B cell (primary cell): ENCODE measurements at regions of chr16 and their contacts with region 1.

Region 1: DNA sequence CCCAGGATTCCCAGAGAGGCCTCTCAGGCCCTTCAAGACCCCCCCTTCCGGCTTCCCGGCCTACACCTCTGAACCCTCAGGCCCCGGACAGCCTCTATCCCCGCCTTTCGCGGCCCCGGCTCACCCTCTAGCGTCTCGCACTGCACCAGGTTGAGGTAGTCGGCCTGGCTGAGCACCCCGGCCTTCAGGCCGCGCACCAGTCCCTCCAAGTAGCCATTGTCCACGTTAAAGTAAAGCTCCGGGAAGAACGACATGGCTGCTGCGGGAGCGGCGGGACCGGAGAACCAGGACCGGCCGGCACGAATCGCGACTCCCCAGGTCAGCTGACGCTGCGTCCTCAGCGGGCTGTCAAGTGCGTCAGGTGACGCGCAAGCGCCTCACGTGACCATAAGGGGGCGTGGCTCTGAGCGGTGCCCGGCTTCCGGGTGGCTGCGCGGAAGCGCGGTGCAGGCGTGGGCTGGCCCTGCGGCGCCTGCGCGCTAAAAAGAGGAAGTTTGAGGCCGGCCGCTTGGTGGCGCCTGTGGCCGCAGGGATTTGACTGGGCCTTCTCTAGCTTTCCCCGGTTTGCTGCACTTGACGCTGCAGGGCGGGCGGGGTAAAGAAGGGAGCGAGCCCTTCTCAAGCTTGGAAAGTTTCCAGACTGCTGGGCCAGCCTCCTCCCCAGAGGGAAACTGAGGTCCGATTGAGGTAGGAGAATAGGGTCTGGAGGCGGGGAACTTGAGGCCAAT is at the start of gene ATP6V0D1:
- DNase-seq: peak; percentile 100
- ATAC-seq: peak; percentile 85
- H3K4me3 ChIP-seq: peak within 1 kb of the TSS; percentile 67 to 100 (median 99)
- H3K4me3 Mint-ChIP-seq: peak within 1 kb of the TSS; percentile 99
- H3K27ac ChIP-seq: peak within 1 kb of the TSS; percentile 99 to 100
- H3K27ac Mint-ChIP-seq: peak within 1 kb of the TSS; percentile 98
- H3K4me1 ChIP-seq: peaks cover 38 to 52% of the 10 kb centered on the region in 2 donors
- H3K4me1 Mint-ChIP-seq: peaks cover 63% of the 10 kb centered on the region
- H3K27me3 ChIP-seq: no peaks in the 10 kb centered on the region
- H3K27me3 Mint-ChIP-seq: no peaks in the 10 kb centered on the region
- CTCF ChIP-seq: peak; percentile 79
- total RNA-seq, gene ATP6V0D1: 59.7 and 62.1 TPM in 2 replicates

Region 2: GRCh38 chr16:67399181-67399733 is 81.7 kb before region 1 on chr16:
- CTCF ChIA-PET with region 1: no interaction called
- POLR2A ChIA-PET with region 1: no interaction called
- intact Hi-C with region 1: no loop called
- DNase-seq: peak; percentile 72
- ATAC-seq: peak; percentile 78
- H3K4me3 ChIP-seq: no peak overlapping the region
- H3K4me3 Mint-ChIP-seq: no peak overlapping the region
- H3K27ac ChIP-seq: no peak overlapping the region
- H3K27ac Mint-ChIP-seq: no peak overlapping the region
- H3K4me1 ChIP-seq: peaks cover 11 to 16% of the 10 kb centered on the region in 2 donors
- H3K4me1 Mint-ChIP-seq: peaks cover 4% of the 10 kb centered on the region
- H3K27me3 ChIP-seq: peaks cover 0 to 33% (median 11%) of the 10 kb centered on the region in 4 experiments
- H3K27me3 Mint-ChIP-seq: peaks cover 17% of the 10 kb centered on the region
- CTCF ChIP-seq: peak; percentile 84

Region 3: GRCh38 chr16:67499106-67499505 is 18.1 kb after region 1 on chr16:
- CTCF ChIA-PET with region 1: interaction called, 127 read pairs
- POLR2A ChIA-PET with region 1: interaction called, 5 read pairs
- intact Hi-C with region 1: loop called (anchors 2 kb)
- DNase-seq: no peak
- ATAC-seq: no peak
- H3K4me3 ChIP-seq: no peak overlapping the region
- H3K4me3 Mint-ChIP-seq: no peak overlapping the region
- H3K27ac ChIP-seq: no peak overlapping the region
- H3K27ac Mint-ChIP-seq: peak overlapping the region; percentile 70
- H3K4me1 ChIP-seq: peaks cover 13 to 17% of the 10 kb centered on the region in 2 donors
- H3K4me1 Mint-ChIP-seq: peaks cover 29% of the 10 kb centered on the region
- H3K27me3 ChIP-seq: no peaks in the 10 kb centered on the region
- H3K27me3 Mint-ChIP-seq: no peaks in the 10 kb centered on the region
- CTCF ChIP-seq: no peak

Region 4: GRCh38 chr16:67530013-67530939 is 49.3 kb after region 1 on chr16:
- CTCF ChIA-PET with region 1: interaction called, 817 read pairs
- POLR2A ChIA-PET with region 1: interaction called, 13 read pairs
- intact Hi-C with region 1: loop called (anchors 2 kb)
- DNase-seq: peak; percentile 94
- ATAC-seq: peak; percentile 59
- H3K4me3 ChIP-seq: peak overlapping the region; percentile 65 to 92 (median 85)
- H3K4me3 Mint-ChIP-seq: peak overlapping the region; percentile 95
- H3K27ac ChIP-seq: peak overlapping the region; percentile 96 to 100
- H3K27ac Mint-ChIP-seq: peak overlapping the region; percentile 98
- H3K4me1 ChIP-seq: peaks cover 38 to 70% of the 10 kb centered on the region in 2 donors
- H3K4me1 Mint-ChIP-seq: peaks cover 63% of the 10 kb centered on the region
- H3K27me3 ChIP-seq: no peaks in the 10 kb centered on the region
- H3K27me3 Mint-ChIP-seq: no peaks in the 10 kb centered on the region
- CTCF ChIP-seq: no peak

Region 5: DNA sequence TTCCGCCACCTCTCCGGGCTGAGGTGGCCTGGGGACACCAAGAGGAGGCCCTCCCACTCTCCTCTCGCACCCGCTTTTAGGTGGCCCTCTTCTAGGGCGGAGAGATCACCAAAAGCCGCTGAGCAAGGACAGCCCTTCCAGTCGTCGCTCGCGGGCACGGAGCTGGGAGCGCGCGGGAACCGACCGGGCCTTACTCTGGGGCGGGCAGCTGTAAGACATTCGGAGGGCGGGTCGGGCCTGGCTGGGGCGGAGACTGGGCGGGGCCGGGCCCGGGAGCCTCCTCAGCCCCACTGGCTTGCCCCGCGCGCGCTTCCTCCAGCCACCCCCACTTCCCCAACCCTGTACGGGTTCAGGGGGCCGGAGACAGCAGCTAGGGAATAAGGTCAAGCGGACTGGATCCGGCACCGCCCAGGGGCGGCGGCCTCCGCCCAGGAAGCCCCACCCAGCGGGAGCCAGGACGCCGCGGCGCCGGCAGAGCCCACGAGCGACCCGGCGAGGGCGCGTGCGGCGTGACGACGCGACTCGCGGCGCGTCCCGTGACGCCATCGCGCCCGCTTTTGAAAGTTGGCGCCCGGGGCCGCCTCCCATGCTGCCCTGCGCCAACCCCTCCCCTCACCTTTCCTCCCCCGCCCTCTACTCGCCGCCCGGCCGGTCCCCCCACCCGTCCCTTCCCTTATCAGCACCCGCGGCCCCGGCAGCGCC is 81.0 kb after region 1 on chr16:
- CTCF ChIA-PET with region 1: interaction called, 13 read pairs
- POLR2A ChIA-PET with region 1: interaction called, 4 read pairs
- intact Hi-C with region 1: loop called (anchors 1 kb)
- DNase-seq: peak; percentile 99
- ATAC-seq: peak; percentile 74
- H3K4me3 ChIP-seq: peak overlapping the region; percentile 50 to 76 (median 60)
- H3K4me3 Mint-ChIP-seq: peak overlapping the region; percentile 89
- H3K27ac ChIP-seq: peak overlapping the region; percentile 71 to 80
- H3K27ac Mint-ChIP-seq: peak overlapping the region; percentile 95
- H3K4me1 ChIP-seq: peaks cover 42 to 55% of the 10 kb centered on the region in 2 donors
- H3K4me1 Mint-ChIP-seq: peaks cover 50% of the 10 kb centered on the region
- H3K27me3 ChIP-seq: no peaks in the 10 kb centered on the region
- H3K27me3 Mint-ChIP-seq: no peaks in the 10 kb centered on the region
- CTCF ChIP-seq: no peak

Region 6: GRCh38 chr16:67667817-67668494 is 187.0 kb after region 1 on chr16:
- CTCF ChIA-PET with region 1: interaction called, 42 read pairs
- POLR2A ChIA-PET with region 1: interaction called, 5 read pairs
- intact Hi-C with region 1: no loop called
- DNase-seq: peak; percentile 89
- ATAC-seq: peak; percentile 81
- H3K4me3 ChIP-seq: peak overlapping the region in 4 of 5 experiments; percentile 67 to 91 (median 80)
- H3K4me3 Mint-ChIP-seq: peak overlapping the region; percentile 91
- H3K27ac ChIP-seq: peak overlapping the region; percentile 77 to 86
- H3K27ac Mint-ChIP-seq: peak overlapping the region; percentile 84
- H3K4me1 ChIP-seq: peaks cover 36 to 49% of the 10 kb centered on the region in 2 donors
- H3K4me1 Mint-ChIP-seq: peaks cover 49% of the 10 kb centered on the region
- H3K27me3 ChIP-seq: no peaks in the 10 kb centered on the region
- H3K27me3 Mint-ChIP-seq: no peaks in the 10 kb centered on the region
- CTCF ChIP-seq: peak; percentile 75

Region 7: GRCh38 chr16:68085259-68086071 is 604.5 kb after region 1 on chr16 and contains the start of gene NFATC3:
- CTCF ChIA-PET with region 1: no interaction called
- POLR2A ChIA-PET with region 1: interaction called, 5 read pairs
- intact Hi-C with region 1: loop called (anchors 1 kb)
- DNase-seq: peak; percentile 99
- ATAC-seq: peak; percentile 76
- H3K4me3 ChIP-seq: peak within 1 kb of the TSS; percentile 90 to 97 (median 94)
- H3K4me3 Mint-ChIP-seq: peak within 1 kb of the TSS; percentile 86
- H3K27ac ChIP-seq: peak within 1 kb of the TSS; percentile 81 to 93
- H3K27ac Mint-ChIP-seq: peak within 1 kb of the TSS; percentile 96
- H3K4me1 ChIP-seq: peaks cover 57 to 73% of the 10 kb centered on the region in 2 donors
- H3K4me1 Mint-ChIP-seq: peaks cover 68% of the 10 kb centered on the region
- H3K27me3 ChIP-seq: no peaks in the 10 kb centered on the region
- H3K27me3 Mint-ChIP-seq: no peaks in the 10 kb centered on the region
- CTCF ChIP-seq: no peak
- total RNA-seq, gene NFATC3: 115 TPM in 2 replicates